ENCODE measurements at regions of chr19 and their contacts with region 1.

Region 1: GRCh38 chr19:55484593-55485438 is at the start of gene NAT14:
- DNase-seq: no peak
- H3K4me3 ChIP-seq: peak within 1 kb of the TSS; percentile 82
- H3K27me3 ChIP-seq: no peaks in the 10 kb centered on the region
- CTCF ChIP-seq: no peak
- polyA plus RNA-seq, gene NAT14: 20.4 and 34.8 TPM in 2 replicates

Region 2: DNA sequence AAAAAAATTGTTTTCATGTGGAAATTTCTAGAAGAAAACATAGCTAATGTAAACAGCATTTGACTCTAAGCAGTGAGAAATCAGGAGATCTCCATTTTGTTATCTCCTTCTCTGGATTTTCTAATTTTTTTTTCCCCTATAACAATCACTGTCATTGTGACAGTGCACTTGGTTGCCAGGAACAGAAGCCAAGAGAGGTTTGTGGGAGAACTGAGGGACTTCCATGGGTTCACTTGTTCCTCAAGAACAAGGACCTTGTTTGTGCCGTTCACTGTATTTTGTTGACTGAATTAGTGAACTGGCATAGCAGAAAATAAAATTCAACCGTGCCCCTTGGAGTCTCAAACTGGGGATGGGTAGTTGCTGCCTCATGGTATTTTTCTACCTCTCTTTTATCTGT is 58.8 kb before region 1 on chr19:
- CTCF ChIA-PET with region 1: no interaction called
- POLR2A ChIA-PET with region 1: no interaction called
- DNase-seq: no peak
- H3K4me3 ChIP-seq: no peak overlapping the region
- H3K27me3 ChIP-seq: peaks cover 6% of the 10 kb centered on the region
- CTCF ChIP-seq: no peak

Region 3: GRCh38 chr19:55467236-55468053 is 17.4 kb before region 1 on chr19:
- CTCF ChIA-PET with region 1: interaction called, 24 read pairs
- POLR2A ChIA-PET with region 1: interaction called, 5 read pairs
- DNase-seq: no peak
- H3K4me3 ChIP-seq: no peak overlapping the region
- H3K27me3 ChIP-seq: no peaks in the 10 kb centered on the region
- CTCF ChIP-seq: peak; percentile 82

Region 4: DNA sequence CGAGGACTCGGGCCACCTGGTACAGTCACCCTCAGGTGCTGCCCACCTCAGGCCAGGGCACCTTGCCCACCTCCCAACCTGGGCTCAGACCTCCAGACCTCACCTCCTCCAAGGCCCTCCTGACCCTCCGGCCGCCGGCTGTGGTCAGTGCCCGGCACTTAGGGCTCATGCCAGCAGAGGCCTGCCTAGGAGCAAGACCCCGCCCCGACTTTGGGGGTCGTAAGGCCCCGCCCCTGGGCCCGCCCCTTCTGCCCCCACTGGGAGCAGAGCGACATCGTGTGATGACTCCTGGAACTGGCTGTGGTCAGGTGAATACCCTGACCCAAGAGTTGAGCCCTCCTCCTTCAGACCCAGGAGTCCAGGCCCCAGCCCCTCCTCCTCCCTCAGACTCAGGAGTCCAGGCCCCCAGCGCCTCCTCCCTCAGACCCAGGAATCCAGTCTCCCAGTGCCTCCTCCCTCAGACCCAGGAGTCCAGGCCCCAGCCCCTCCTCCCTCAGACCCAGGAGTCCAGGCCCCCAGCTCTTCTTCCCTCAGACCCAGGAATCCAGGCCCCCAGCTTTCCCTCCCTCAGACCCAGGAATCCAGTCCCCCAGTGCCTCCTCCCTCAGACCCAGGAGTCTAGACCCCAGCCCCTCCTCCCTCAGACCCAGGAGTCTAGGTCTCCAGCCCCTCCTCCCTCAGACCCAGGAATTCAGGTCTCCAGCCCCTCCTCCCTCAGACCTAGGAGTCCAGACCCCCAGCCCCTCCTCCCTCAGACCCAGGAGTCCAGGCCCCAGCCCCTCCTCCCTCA is 52.3 kb after region 1 on chr19 and contains the start of gene SBK2:
- CTCF ChIA-PET with region 1: no interaction called
- POLR2A ChIA-PET with region 1: no interaction called
- DNase-seq: no peak
- H3K4me3 ChIP-seq: no peak within 1 kb of the TSS
- H3K27me3 ChIP-seq: no peaks in the 10 kb centered on the region
- CTCF ChIP-seq: peak; percentile 25; the same call in 1 of the 2 replicates
- polyA plus RNA-seq, gene SBK2: 0.07 TPM in 1 of 2 replicates, not detected in the other

Measured in BJ (cell line).